ENCODE measurements at regions of chr3 and their contacts with region 1.

Region 1: DNA sequence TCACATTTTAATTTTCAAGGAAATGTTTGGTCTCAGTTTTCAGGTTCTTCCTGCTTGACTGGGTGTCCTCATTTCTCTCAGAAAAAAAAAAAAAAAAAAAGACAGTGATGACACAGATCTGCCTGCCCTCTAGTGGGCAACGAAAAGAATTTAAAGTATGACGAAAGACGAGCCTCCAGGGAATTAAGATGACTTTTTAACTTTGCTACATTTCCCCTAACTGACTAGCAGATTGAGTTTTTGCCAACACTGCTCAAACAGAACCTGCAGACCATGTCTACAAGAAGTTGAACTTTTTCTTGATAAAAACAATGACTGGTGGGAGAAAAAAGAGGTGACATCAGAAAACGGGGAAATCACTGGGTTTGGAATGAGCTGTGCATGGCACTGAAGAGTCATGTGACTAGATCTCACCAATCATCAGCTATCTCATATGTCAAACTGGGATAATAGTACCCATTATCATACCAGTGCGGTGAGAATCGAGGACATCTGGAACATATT is 40.8 kb downstream of the EOMES start:
- DNase-seq: peak; percentile 79
- H3K4me3 ChIP-seq: peak overlapping the region in 1 of 3 experiments; percentile 12
- H3K27ac ChIP-seq: peak overlapping the region; percentile 20
- H3K4me1 ChIP-seq: peaks cover 3% of the 10 kb centered on the region
- H3K27me3 ChIP-seq: no peaks in the 10 kb centered on the region
- CTCF ChIP-seq: peak; percentile 50 to 55
- POLR2A ChIP-seq: no peak

Region 2: GRCh38 chr3:27357665-27358258 is 323.5 kb before region 1 on chr3:
- CTCF ChIA-PET with region 1: interaction called, 59 read pairs
- POLR2A ChIA-PET with region 1: no interaction called
- dilution Hi-C with region 1: no loop called
- intact Hi-C with region 1: loop called (anchors 1 kb)
- DNase-seq: peak; percentile 80
- H3K4me3 ChIP-seq: no peak overlapping the region
- H3K27ac ChIP-seq: no peak overlapping the region
- H3K4me1 ChIP-seq: peaks cover 45% of the 10 kb centered on the region
- H3K27me3 ChIP-seq: no peaks in the 10 kb centered on the region
- CTCF ChIP-seq: peak; percentile 73 to 79
- POLR2A ChIP-seq: no peak

Region 3: GRCh38 chr3:27467545-27467944 is 213.8 kb before region 1 on chr3:
- CTCF ChIA-PET with region 1: interaction called, 116 read pairs
- POLR2A ChIA-PET with region 1: interaction called, 3 read pairs
- dilution Hi-C with region 1: no loop called
- intact Hi-C with region 1: loop called (anchors 1 kb)
- DNase-seq: peak; percentile 70
- H3K4me3 ChIP-seq: no peak overlapping the region
- H3K27ac ChIP-seq: no peak overlapping the region
- H3K4me1 ChIP-seq: peaks cover 8% of the 10 kb centered on the region
- H3K27me3 ChIP-seq: no peaks in the 10 kb centered on the region
- CTCF ChIP-seq: peak; percentile 36 to 40
- POLR2A ChIP-seq: no peak

Region 4: GRCh38 chr3:27544372-27544865 is 136.9 kb before region 1 on chr3:
- CTCF ChIA-PET with region 1: interaction called, 11 read pairs
- POLR2A ChIA-PET with region 1: no interaction called
- dilution Hi-C with region 1: no loop called
- intact Hi-C with region 1: no loop called
- DNase-seq: peak; percentile 70
- H3K4me3 ChIP-seq: no peak overlapping the region
- H3K27ac ChIP-seq: peak overlapping the region; percentile 19
- H3K4me1 ChIP-seq: peaks cover 12% of the 10 kb centered on the region
- H3K27me3 ChIP-seq: no peaks in the 10 kb centered on the region
- CTCF ChIP-seq: no peak
- POLR2A ChIP-seq: no peak

Region 5: DNA sequence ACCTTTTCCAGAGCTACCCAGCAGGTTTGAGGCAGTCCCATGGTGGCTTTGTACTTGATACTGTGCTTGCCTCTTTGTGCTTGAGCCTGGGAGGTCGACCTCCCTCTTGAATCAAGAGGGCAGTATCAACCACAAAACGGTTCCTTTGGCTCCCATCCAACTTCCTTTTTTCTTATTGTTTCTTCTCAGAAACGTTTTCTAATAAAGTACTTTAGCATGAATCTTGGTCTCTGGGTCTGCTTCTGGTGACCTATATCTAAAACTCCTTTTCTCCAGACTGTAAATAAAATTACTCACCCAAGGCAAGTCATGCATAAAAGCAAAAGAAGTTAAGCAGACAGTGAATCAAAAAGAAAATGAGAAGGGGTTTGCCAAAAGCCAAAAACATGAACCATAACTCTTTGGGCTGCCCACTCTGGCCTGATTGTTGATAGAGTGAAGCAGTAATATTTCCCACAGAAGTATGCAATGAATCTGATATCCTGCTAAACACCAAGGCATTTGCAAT is 84.9 kb before region 1 on chr3:
- CTCF ChIA-PET with region 1: interaction called, 57 read pairs
- POLR2A ChIA-PET with region 1: no interaction called
- dilution Hi-C with region 1: no loop called
- intact Hi-C with region 1: no loop called
- DNase-seq: peak; percentile 94
- H3K4me3 ChIP-seq: no peak overlapping the region
- H3K27ac ChIP-seq: peak overlapping the region; percentile 40
- H3K4me1 ChIP-seq: peaks cover 28% of the 10 kb centered on the region
- H3K27me3 ChIP-seq: no peaks in the 10 kb centered on the region
- CTCF ChIP-seq: no peak
- POLR2A ChIP-seq: no peak

Region 6: DNA sequence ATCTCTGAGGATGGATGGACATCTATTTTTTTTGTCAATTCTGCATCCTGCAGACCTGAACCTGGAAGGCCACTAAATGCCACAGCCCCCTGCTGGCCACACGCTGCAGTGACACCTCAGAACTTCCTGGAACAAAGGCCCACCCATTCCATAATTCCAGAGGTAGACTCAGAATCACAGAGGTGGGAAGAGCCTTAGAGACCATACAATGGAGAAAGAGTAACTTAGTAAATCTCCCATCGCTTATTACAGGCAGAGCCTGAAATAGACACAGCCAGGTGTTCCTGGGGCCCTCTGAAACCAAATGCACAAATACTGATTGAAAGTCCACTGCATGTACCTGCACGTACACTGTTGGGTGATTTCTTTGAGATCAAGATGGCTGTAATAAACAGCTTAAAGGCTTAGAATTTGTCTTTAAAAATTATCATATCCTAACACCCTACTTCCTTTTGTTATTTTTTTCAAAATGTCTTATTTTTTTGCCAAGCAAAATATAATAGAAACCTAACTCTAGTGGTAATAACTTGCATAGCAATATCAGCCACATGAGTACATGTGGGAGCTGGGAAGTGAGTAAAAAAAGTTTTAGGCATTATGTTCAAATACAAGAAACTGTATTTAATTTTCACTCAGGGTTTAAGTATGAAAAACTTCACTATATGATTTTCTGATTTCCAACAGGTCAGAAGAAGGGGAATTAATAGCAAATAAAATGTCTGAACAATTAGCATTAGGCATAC is 21.8 kb before region 1 on chr3:
- CTCF ChIA-PET with region 1: interaction called, 19 read pairs
- POLR2A ChIA-PET with region 1: interaction called, 4 read pairs
- dilution Hi-C with region 1: no loop called
- intact Hi-C with region 1: no loop called
- DNase-seq: peak; percentile 55
- H3K4me3 ChIP-seq: no peak overlapping the region
- H3K27ac ChIP-seq: no peak overlapping the region
- H3K4me1 ChIP-seq: peaks cover 13% of the 10 kb centered on the region
- H3K27me3 ChIP-seq: no peaks in the 10 kb centered on the region
- CTCF ChIP-seq: peak; percentile 74 to 91
- POLR2A ChIP-seq: no peak

Region 7: DNA sequence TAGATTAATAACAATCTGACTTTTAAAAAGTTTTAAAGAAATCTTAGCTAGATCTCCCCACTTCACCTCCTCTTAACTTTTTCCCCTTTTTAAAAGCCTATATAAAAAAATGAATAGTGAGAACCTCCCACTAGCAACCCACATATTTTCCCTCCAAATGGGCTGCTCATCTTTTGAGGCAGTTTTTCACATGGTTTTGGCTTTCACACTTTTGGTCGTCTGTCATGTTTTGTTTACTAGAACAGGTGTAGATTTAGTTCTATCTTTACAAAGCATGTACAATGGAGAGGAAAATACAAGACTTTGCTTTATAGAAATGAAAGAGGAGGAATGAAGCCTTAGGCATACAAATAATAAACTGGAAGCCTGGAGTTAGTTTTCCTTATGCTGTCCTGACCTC is 167.5 kb after region 1 on chr3:
- CTCF ChIA-PET with region 1: no interaction called
- POLR2A ChIA-PET with region 1: no interaction called
- dilution Hi-C with region 1: no loop called
- intact Hi-C with region 1: no loop called
- DNase-seq: no peak
- H3K4me3 ChIP-seq: no peak overlapping the region
- H3K27ac ChIP-seq: no peak overlapping the region
- H3K4me1 ChIP-seq: no peaks in the 10 kb centered on the region
- H3K27me3 ChIP-seq: no peaks in the 10 kb centered on the region
- CTCF ChIP-seq: no peak
- POLR2A ChIP-seq: no peak

Measured in endothelial cell of umbilical vein (primary cell).